ENCODE measurements at regions of chr10 and their contacts with region 1.

Region 1: GRCh38 chr10:66180581-66181318 is 745.1 kb upstream of the LRRTM3 start:
- DNase-seq: peak; percentile 52
- ATAC-seq: peak; percentile 57
- H3K4me3 ChIP-seq: no peak overlapping the region
- H3K27ac ChIP-seq: no peak overlapping the region
- H3K4me1 ChIP-seq: no peaks in the 10 kb centered on the region
- H3K27me3 ChIP-seq: no peaks in the 10 kb centered on the region
- CTCF ChIP-seq: peak; percentile 65
- EP300 ChIP-seq: no peak
- POLR2A ChIP-seq: no peak
- RAD21 ChIP-seq: no peak

Region 2: GRCh38 chr10:64733980-64734379 is 1446.8 kb before region 1 on chr10:
- CTCF ChIA-PET with region 1: interaction called, 8 read pairs
- POLR2A ChIA-PET with region 1: no interaction called
- in situ Hi-C with region 1: loop called (anchors 25 kb)
- intact Hi-C with region 1: loop called (anchors 1 kb)
- DNase-seq: peak; percentile 32
- ATAC-seq: peak; percentile 68
- H3K4me3 ChIP-seq: no peak overlapping the region
- H3K27ac ChIP-seq: no peak overlapping the region
- H3K4me1 ChIP-seq: peaks cover 29% of the 10 kb centered on the region
- H3K27me3 ChIP-seq: no peaks in the 10 kb centered on the region
- CTCF ChIP-seq: peak; percentile 63
- EP300 ChIP-seq: no peak
- POLR2A ChIP-seq: no peak
- RAD21 ChIP-seq: no peak

Region 3: DNA sequence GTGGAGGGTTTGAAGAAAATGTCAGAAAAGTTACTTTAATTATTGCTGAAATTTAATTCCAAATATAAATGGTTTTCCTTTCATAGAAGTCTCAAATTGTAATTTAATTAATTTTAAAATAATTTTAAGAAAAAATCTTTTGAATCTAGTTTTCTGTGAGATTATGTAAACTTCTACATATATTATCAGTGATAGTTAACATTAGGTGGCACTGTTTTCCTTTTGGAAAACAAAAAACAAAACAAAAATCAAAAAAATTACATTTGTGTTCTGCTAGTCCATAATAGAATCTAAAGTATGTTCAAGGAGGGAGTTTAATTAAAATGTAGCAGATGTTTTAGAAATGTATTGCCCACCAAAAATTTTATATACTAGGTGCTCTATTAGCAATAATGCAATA is 1202.8 kb before region 1 on chr10:
- CTCF ChIA-PET with region 1: no interaction called
- POLR2A ChIA-PET with region 1: no interaction called
- in situ Hi-C with region 1: no loop called
- intact Hi-C with region 1: loop called (anchors 1 kb)
- DNase-seq: no peak
- ATAC-seq: no peak
- H3K4me3 ChIP-seq: no peak overlapping the region
- H3K27ac ChIP-seq: no peak overlapping the region
- H3K4me1 ChIP-seq: no peaks in the 10 kb centered on the region
- H3K27me3 ChIP-seq: no peaks in the 10 kb centered on the region; a peak in 1 of 5 replicates
- CTCF ChIP-seq: no peak
- EP300 ChIP-seq: no peak
- POLR2A ChIP-seq: no peak
- RAD21 ChIP-seq: no peak

Region 4: DNA sequence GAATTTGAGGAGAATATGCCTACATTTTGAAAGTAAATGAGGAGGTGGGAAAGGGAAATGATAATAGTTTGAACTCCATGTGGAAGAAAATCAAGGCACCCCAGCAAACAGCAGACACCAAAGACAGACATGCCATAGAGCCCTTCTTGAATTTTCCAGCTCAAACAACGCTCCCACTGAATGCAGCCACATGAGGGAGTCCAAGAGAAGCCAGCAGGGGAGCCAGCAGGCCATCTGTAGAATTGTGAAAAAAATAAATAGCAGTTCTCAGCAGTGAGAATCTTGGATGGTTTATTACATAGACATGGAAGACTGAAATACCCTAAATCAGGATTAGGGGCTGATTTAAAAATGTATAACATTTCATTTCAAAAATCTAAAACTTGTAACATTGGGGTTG is 822.2 kb before region 1 on chr10:
- CTCF ChIA-PET with region 1: interaction called, 3 read pairs
- POLR2A ChIA-PET with region 1: no interaction called
- in situ Hi-C with region 1: no loop called
- intact Hi-C with region 1: loop called (anchors 2 kb)
- DNase-seq: peak; percentile 13
- ATAC-seq: peak; percentile 63
- H3K4me3 ChIP-seq: no peak overlapping the region
- H3K27ac ChIP-seq: no peak overlapping the region
- H3K4me1 ChIP-seq: no peaks in the 10 kb centered on the region
- H3K27me3 ChIP-seq: no peaks in the 10 kb centered on the region
- CTCF ChIP-seq: peak; percentile 44
- EP300 ChIP-seq: no peak
- POLR2A ChIP-seq: no peak
- RAD21 ChIP-seq: no peak